Common myeloid progenitor, CD34-positive (primary cell): ENCODE measurements at regions of chr17 and their contacts with region 1.

Region 1: GRCh38 chr17:44610871-44611270 is 45.4 kb upstream of the MEIOC start:
- DNase-seq: peak; percentile 9 to 54 (median 46)
- H3K4me3 ChIP-seq: no peak overlapping the region
- H3K27ac ChIP-seq: no peak overlapping the region
- H3K4me1 ChIP-seq: peaks cover 0 to 20% (median 5%) of the 10 kb centered on the region in 4 experiments
- H3K27me3 ChIP-seq: peaks cover 0 to 6% (median 0%) of the 10 kb centered on the region in 5 experiments

Region 2: GRCh38 chr17:44599298-44600175 is 11.3 kb before region 1 on chr17:
- CTCF ChIA-PET with region 1: no interaction called
- POLR2A ChIA-PET with region 1: no interaction called
- DNase-seq: no peak
- H3K4me3 ChIP-seq: no peak overlapping the region
- H3K27ac ChIP-seq: no peak overlapping the region
- H3K4me1 ChIP-seq: peaks cover 0 to 2% (median 0%) of the 10 kb centered on the region in 4 experiments
- H3K27me3 ChIP-seq: peaks cover 0 to 4% (median 0%) of the 10 kb centered on the region in 5 experiments

Region 3: DNA sequence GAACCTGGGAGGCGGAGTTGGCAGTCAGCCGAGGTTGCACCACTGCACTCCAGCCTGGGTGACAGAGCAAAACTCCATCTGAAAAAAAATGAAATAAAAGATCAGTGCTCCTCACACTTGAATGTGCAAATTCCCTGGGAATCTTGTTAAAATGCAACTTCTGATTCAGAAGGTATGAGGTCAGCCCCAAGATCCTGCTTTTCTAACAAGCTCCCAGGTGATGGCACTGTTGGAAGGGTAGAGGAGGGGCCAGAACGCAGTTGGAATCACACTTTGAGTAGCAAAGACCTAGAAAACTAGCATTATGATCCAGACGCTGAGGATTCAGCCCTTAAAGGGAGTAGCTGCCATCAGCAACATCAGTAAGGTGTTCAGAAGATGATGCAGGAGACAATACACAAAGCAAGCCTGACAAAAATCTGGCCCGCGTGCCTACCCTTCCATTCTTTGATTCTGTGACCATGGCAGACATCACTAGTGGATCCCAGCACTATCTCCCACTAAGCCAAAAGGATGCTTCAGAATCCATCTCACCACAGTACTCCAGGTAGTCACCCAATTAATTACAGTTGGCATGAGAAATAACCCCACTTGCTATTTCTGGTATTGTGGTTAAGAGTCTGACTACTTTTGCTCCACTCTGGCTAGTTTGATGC is 12.3 kb after region 1 on chr17:
- CTCF ChIA-PET with region 1: interaction called, 11 read pairs
- POLR2A ChIA-PET with region 1: interaction called, 4 read pairs
- DNase-seq: no peak
- H3K4me3 ChIP-seq: no peak overlapping the region
- H3K27ac ChIP-seq: no peak overlapping the region
- H3K4me1 ChIP-seq: peaks cover 0 to 3% (median under 1%) of the 10 kb centered on the region in 4 experiments
- H3K27me3 ChIP-seq: peaks cover 0 to 12% (median 0%) of the 10 kb centered on the region in 5 experiments